Activated CD8-positive, alpha-beta T cell treated with anti-CD3 and anti-CD28 coated beads for 36 hours (primary cell): ENCODE measurements at regions of chr16 and their contacts with region 1.

Region 1: DNA sequence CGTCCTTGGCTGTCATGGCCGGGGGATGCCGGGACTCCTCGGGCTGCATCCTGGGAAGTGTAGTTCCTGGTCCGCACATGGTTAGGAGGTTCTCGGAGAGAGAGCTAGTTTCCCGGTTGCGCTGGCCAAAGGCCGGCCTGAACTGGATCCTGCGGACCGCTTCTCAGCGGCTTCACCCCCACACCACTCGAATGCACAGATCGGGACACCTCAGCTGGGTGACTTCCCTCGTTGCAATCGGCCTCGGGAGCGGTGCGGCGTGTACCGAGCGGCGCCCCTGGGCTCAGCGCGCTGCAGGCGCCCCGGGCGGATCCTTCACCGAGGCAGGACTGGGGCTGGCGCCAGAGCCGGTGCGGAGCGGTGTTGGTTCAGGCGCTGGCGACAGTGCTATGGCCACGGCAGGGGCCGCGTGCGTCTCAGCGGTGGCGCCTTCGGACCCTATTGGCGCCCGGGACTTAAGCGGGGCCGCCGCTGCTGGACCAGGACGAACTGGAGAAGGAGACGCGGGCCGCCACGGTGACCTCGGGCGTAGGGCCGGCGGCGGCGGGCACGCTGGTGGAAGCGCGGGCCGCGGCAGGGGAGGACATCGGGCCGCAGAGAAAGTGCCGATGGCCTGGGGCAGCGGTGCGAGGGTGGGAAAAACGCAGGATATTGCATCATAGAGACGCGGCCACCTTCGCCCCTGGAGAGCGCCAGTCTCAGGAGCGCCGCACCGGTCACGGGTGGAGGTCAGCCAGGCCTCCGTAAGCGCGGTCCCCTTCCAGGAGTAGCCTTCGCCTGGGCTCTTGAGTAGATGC is 11.4 kb downstream of the ZNF629 start:
- DNase-seq: peak; percentile 80
- ATAC-seq: peak; percentile 84
- H3K4me3 Mint-ChIP-seq: peak overlapping the region; percentile 80
- H3K27ac Mint-ChIP-seq: peak overlapping the region; percentile 93
- H3K4me1 Mint-ChIP-seq: peaks cover 22% of the 10 kb centered on the region
- H3K27me3 Mint-ChIP-seq: no peaks in the 10 kb centered on the region
- CTCF ChIP-seq: no peak

Region 2: GRCh38 chr16:30761928-30762810 is 13.4 kb before region 1 on chr16 and contains the starts of genes CFAP119 and RNF40:
- CTCF ChIA-PET with region 1: no interaction called
- POLR2A ChIA-PET with region 1: interaction called, 23 read pairs
- intact Hi-C with region 1: no loop called
- DNase-seq: peak; percentile 97
- ATAC-seq: peak; percentile 97
- H3K4me3 Mint-ChIP-seq: peak within 1 kb of the TSS; percentile 93
- H3K27ac Mint-ChIP-seq: peak within 1 kb of the TSS; percentile 82
- H3K4me1 Mint-ChIP-seq: peaks cover 24% of the 10 kb centered on the region
- H3K27me3 Mint-ChIP-seq: no peaks in the 10 kb centered on the region
- CTCF ChIP-seq: no peak
- total RNA-seq, gene CFAP119: 3.8 to 3.9 TPM
- total RNA-seq, gene RNF40: 63.2 to 68.1 TPM